Activated CD4-positive, alpha-beta memory T cell treated with anti-CD3 and anti-CD28 coated beads, Interleukin-2, amount 10 ng/mL, durations not matched to agents 7 days and 5 days (primary cell): ENCODE measurements at regions of chr17 and their contacts with region 1.

Region 1: DNA sequence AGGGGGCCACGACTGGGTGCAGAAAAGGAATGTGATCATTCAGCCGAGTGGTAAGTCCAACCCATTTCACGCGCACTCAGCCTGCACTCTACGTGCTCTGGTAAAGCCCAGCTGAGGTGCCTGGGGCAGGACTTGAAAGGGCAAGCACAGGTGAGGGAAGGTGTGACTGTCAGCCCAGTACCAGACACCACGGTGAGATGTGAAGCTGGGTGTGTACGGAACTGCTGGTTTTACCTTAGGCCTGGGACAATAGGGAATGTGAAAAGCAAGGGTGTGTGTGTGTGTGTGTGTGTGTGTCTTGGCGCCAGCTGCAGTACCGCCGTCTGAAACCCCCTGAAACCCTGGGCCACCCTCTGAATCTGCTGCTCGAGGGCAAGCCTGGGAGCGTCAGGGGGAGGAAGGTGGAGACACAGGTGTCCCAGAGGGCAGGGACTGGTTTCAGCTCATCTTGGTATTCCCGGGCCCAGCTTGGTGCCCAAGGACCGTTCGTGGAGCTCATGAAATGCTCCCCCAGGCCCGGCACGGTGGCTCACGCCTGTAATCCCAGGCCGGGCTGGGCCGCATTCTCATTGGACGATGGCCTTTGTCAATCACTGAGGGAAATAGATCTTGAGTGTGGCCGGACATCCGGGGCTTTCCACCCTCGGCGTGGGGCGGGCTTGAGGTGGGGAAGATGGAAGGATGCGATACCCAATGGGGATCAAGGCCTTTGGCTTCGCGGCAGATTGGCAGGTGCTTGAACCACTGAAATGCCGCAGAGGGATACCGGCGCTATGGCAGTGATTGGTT is 27.8 kb upstream of the ST6GALNAC1 start:
- DNase-seq: peak; percentile 100
- H3K4me3 Mint-ChIP-seq: peak overlapping the region; percentile 89
- H3K27ac Mint-ChIP-seq: peak overlapping the region; percentile 87
- H3K4me1 Mint-ChIP-seq: peaks cover 31% of the 10 kb centered on the region
- H3K27me3 Mint-ChIP-seq: peaks cover 12% of the 10 kb centered on the region

Region 2: DNA sequence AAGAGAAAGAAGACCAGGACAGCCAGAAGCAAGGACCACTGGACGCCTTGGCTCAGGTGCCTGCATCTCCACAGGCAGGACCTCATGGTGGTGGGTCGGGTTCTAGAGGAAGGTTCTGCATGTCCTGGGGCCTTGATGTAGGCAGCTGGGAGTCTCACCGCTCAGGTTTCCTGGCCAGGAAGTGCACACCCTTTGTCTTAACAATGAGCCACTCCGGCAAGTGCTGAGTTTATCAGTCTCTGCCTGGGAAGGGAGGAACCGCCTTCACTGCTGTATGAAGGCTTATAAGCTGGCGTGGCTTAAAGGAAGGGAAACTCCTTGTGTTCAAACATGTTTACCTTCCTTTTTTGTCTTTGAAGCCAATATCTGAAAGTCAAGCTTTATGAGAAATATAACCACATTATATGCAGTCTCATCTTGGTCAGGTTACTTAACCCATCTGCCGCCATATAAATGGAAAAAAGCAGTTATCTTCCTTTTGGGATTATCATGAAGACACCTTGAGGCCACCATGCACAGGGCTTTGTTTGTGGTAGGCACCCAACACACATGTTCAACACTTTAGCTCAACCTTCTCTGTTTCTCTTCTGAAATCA is 27.7 kb before region 1 on chr17 and contains the start of gene ST6GALNAC1:
- CTCF ChIA-PET with region 1: interaction called, 4 read pairs
- POLR2A ChIA-PET with region 1: interaction called, 10 read pairs
- DNase-seq: peak; percentile 38
- H3K4me3 Mint-ChIP-seq: peak within 1 kb of the TSS; percentile 61
- H3K27ac Mint-ChIP-seq: peak within 1 kb of the TSS; percentile 49
- H3K4me1 Mint-ChIP-seq: peaks cover 22% of the 10 kb centered on the region
- H3K27me3 Mint-ChIP-seq: peaks cover 15% of the 10 kb centered on the region
- total RNA-seq, gene ST6GALNAC1: 3.1 to 4.0 TPM

Region 3: DNA sequence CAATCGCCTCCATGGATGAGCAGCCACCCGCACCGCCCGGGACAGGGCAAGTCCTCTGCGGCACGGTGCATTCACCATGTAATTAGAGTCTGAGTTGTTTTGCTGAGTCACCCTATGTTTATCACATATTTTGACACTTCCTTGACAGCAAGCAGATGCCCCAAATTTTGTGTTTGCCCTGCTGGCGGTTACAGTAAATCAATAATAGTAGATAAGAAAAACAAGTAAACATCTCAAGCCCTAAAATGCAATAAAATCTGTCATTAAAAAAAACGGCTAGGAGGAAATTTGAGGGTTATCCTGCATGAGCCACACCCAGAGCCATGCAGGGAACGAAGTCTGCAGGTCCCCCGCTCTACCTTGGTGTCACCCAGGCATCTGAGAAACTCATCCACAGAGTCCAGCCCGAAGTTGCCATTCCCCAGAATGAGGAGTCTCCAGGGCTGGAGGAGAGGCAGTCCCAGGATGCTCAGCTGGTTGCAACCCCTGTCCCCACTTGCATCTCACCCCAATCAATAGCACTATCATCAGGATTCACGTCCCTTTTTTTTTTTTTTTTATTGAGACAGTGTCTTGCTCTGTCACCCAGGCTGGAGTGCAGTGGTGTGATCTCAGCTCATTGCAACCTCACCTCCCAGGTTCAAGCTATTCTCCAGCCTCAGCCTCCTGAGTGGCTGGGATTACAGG is 11.2 kb before region 1 on chr17:
- CTCF ChIA-PET with region 1: interaction called, 13 read pairs
- POLR2A ChIA-PET with region 1: interaction called, 32 read pairs
- DNase-seq: peak; percentile 48
- H3K4me3 Mint-ChIP-seq: peak overlapping the region; percentile 38
- H3K27ac Mint-ChIP-seq: peak overlapping the region; percentile 86
- H3K4me1 Mint-ChIP-seq: peaks cover 32% of the 10 kb centered on the region
- H3K27me3 Mint-ChIP-seq: peaks cover 11% of the 10 kb centered on the region

Region 4: DNA sequence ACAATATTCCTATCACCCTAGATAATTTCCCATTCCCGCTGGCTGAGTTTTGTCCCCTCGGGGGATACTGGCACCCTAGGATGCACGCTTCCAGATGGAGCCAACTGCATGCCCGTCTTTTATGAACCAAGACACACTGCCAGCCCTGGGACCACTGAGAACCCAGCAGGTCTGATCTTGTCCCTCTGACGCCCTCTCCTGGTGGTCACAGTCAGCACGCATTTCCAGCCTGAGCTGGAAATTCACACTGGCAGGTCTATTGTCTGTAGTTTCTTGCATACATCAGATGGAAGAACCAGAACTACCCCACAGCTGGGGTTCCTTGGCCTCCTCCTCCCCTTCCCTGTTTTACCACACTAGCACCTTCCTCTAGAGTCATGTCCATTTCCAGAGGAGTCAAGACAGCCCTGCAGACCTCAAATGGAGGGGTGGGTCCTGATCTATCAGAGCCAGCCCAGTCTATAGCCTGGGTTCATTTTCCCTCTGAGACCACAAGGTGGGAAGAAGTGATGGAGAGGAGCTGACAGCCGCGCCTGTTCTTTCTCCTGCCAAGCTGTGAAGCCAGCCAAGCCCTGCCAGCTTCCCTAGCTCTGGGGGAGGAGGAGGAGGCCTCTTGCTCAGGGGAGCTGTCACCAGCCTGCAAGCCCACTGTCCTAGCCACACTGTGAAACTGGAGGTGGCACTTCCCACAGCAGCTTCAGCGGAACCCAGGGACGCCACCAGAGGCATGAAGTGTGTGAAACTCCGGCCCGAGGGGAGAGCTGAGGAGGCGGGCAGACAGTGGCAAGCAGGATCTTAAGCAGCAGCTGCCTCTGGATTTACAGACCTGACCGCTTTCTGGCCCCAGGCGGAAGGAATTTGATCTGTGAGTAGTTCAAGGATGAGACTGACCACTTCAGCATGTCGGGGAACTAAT is 10.2 kb after region 1 on chr17:
- CTCF ChIA-PET with region 1: interaction called, 27 read pairs
- POLR2A ChIA-PET with region 1: interaction called, 12 read pairs
- DNase-seq: peak; percentile 79
- H3K4me3 Mint-ChIP-seq: no peak overlapping the region
- H3K27ac Mint-ChIP-seq: no peak overlapping the region
- H3K4me1 Mint-ChIP-seq: peaks cover 8% of the 10 kb centered on the region
- H3K27me3 Mint-ChIP-seq: peaks cover 6% of the 10 kb centered on the region